PC-9 (cell line): ENCODE measurements at regions of chr6 and their contacts with region 1.

Region 1: GRCh38 chr6:148735989-148736388 is 10.8 kb upstream of the UST start:
- DNase-seq: no peak
- H3K4me3 ChIP-seq: no peak overlapping the region
- H3K27ac ChIP-seq: no peak overlapping the region
- H3K4me1 ChIP-seq: no peaks in the 10 kb centered on the region
- H3K27me3 ChIP-seq: peaks cover 4% of the 10 kb centered on the region; the same call in 1 of the 2 replicates
- CTCF ChIP-seq: no peak

Region 2: DNA sequence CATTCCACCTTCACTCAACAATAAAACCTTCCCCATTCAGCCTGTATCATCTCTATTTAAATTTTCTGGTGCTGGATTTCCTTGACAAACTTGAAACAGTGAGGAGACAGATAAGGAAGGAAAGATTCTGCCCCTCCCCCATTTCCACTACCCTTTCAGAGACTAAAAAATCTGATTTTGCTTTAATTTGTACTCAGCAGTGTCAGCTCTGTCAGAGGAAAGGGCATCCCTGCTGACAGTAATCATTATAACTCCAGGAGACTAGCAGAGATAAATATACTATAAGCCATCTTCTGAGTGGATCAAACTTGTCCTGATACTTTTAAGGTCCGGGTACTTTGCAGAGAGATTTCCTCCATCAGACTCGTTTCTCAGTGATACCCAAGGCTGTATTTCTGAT is 1071.9 kb before region 1 on chr6:
- CTCF ChIA-PET with region 1: interaction called, 11 read pairs
- POLR2A ChIA-PET with region 1: no interaction called
- intact Hi-C with region 1: no loop called
- DNase-seq: no peak
- H3K4me3 ChIP-seq: no peak overlapping the region
- H3K27ac ChIP-seq: no peak overlapping the region
- H3K4me1 ChIP-seq: peaks cover 17% of the 10 kb centered on the region
- H3K27me3 ChIP-seq: no peaks in the 10 kb centered on the region
- CTCF ChIP-seq: no peak

Region 3: GRCh38 chr6:149170564-149171452 is 434.8 kb after region 1 on chr6:
- CTCF ChIA-PET with region 1: no interaction called
- POLR2A ChIA-PET with region 1: no interaction called
- intact Hi-C with region 1: no loop called
- DNase-seq: no peak
- H3K4me3 ChIP-seq: no peak overlapping the region
- H3K27ac ChIP-seq: peak overlapping the region; percentile 78
- H3K4me1 ChIP-seq: peaks cover 34% of the 10 kb centered on the region
- H3K27me3 ChIP-seq: no peaks in the 10 kb centered on the region
- CTCF ChIP-seq: no peak